Esophagus squamous epithelium (tissue), 5 donors: ENCODE measurements at regions of chr1 and their contacts with region 1.

Region 1: GRCh38 chr1:19656780-19657466 is 7.8 kb upstream of the HTR6 start:
- DNase-seq: no peak
- H3K4me3 ChIP-seq: no peak overlapping the region
- H3K27ac ChIP-seq: peak overlapping the region in 2 of 4 donors; percentile 1 to 60
- H3K4me1 ChIP-seq: peaks cover 0 to 72% (median 37%) of the 10 kb centered on the region in 3 donors
- H3K27me3 ChIP-seq: peaks cover 0 to under 1% (median 0%) of the 10 kb centered on the region in 4 donors
- CTCF ChIP-seq: no peak
- POLR2A ChIP-seq: no peak

Region 2: GRCh38 chr1:19341201-19342072 is 315.5 kb before region 1 on chr1:
- intact Hi-C with region 1: loop called (anchors 5 kb)
- DNase-seq: no peak
- H3K4me3 ChIP-seq: no peak overlapping the region
- H3K27ac ChIP-seq: peak overlapping the region in 3 of 4 donors; percentile 45 to 53 (median 45)
- H3K4me1 ChIP-seq: peaks cover 0 to 50% (median 14%) of the 10 kb centered on the region in 3 donors
- H3K27me3 ChIP-seq: no peaks in the 10 kb centered on the region
- CTCF ChIP-seq: peak; percentile 76 to 94 (median 85)
- POLR2A ChIP-seq: no peak

Region 3: DNA sequence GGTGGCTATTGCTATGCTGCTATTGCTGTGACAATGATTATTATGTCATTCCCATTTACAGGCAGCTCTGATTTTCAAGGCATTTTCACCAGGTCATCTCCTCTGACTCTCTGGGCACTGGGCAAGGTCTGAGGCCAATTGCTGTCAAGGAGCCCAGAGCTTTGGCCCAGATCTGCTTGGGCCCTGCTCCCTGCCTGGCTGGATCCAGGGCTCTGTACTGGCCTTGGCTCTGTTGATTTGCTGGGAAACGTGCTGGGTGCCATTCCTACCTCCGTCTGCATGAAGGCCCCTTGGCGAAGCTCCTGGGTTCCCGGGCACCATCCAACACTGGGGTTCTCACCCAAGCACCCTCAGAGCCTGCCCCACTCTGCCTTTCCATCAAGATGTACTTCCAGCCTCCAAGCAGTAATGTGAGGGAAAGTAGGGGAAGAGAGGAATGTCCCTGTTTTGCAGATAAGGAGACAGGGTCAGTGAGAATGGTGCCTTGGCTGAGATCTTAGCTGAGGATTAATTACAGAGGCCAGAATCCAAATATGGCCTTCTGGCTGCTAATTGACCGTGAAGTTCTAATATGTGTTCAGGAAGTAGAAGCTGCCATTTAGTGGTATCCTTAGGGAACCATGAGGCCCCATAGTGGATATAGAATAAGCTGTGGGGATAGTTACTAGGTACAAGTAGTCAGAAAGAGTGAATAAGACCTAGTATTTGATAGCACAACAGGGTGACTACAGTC is 71.7 kb after region 1 on chr1:
- intact Hi-C with region 1: no loop called
- DNase-seq: no peak
- H3K4me3 ChIP-seq: no peak overlapping the region
- H3K27ac ChIP-seq: peak overlapping the region in 1 of 4 donors; percentile 24
- H3K4me1 ChIP-seq: peaks cover 0 to 13% (median 0%) of the 10 kb centered on the region in 3 donors
- H3K27me3 ChIP-seq: no peaks in the 10 kb centered on the region
- CTCF ChIP-seq: no peak
- POLR2A ChIP-seq: no peak